A673 (cell line): ENCODE measurements at regions of chr6 and their contacts with region 1.

Region 1: GRCh38 chr6:41256383-41256782 is 28.2 kb downstream of the TREML4 start:
- DNase-seq: no peak
- H3K4me3 ChIP-seq: no peak overlapping the region
- H3K27ac ChIP-seq: peak overlapping the region; percentile 90
- H3K4me1 ChIP-seq: peaks cover 44% of the 10 kb centered on the region
- H3K27me3 ChIP-seq: no peaks in the 10 kb centered on the region
- CTCF ChIP-seq: no peak

Region 2: DNA sequence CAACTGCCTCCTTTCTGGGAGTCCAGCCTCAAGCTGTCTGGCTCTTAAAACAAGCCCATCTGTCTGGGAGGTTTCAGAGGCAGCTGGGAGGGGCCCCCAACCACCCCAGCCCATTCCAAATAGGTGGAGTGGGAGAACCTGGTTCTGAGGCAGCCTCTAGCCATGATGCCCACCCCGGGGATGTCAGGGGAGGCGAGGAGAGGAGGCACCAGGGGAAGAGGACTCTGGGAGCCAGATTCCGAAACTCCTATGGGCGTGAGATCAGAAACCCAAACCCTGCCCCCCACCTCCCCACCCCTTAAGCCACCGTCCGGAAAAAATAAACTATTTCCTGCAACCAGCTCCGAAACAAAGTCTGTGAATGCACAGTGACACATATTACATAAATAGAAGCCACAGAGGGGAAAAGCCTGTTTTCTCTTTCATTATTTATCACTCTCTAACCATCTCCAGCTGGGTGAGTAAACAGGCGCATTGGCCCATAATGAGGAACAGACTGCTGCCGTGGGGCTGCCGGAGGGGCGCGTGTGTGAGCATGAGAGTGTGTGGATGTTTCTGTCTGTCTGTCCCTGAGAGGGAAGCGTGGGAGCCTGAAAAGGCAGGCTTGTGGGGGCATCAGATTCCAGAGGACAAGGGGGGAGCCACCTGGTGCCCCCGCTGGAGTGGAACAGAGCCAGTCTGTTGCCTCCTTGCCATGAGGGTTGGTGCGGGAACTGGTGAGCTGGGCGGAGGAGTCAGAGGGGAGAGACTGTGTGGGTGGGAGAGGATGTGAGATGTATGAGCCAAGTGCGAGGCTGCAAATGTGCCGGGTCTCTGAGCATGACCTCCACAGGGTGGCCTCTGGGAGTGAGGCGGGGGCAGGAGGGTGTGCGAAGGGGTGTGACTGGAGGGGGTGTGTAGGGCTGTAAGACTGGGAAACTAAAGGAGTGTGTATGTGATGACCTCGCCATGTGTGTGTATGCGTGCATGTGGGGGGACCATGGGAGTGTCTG is 275.5 kb after region 1 on chr6:
- CTCF ChIA-PET with region 1: no interaction called
- POLR2A ChIA-PET with region 1: interaction called, 13 read pairs
- intact Hi-C with region 1: no loop called
- DNase-seq: peak; percentile 78
- H3K4me3 ChIP-seq: no peak overlapping the region
- H3K27ac ChIP-seq: peak overlapping the region; percentile 18
- H3K4me1 ChIP-seq: peaks cover 38% of the 10 kb centered on the region
- H3K27me3 ChIP-seq: no peaks in the 10 kb centered on the region
- CTCF ChIP-seq: no peak